CD8-positive, alpha-beta memory T cell (primary cell): ENCODE measurements at regions of chr2 and their contacts with region 1.

Region 1: DNA sequence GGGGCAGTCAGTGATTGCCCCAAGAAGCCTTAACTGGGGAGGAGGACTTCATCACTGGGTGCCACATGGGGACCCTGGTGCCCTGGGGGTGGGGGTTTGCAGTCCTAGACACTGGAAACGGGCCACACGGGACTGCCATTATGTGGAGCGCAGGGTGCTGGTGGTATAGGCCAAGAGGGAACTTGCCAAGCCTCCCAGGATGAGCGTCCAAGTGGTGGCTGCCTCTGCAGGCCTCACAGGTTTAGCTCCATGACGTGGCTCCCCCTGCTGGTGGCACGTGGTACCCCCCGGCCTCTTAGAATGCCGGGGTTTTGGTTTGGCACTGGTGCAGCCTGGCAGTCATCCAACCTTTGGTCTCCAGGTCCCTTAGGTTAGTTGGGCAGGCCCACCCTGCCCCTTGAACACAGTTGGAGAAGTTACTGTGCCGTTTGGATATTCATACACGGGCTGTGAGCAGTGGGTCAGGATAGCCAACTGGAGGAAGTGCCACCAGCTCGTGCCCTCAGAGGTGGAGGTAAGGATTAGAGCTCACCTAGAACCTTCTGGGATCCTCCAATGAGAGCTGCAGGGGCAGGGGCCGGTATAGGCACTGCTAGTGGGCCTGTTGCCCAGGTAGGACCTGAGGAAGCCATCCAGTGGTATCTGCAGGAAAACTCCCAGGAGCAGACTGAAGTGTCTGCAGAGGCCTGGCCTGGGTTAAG is 5.6 kb downstream of the PTMA start:
- DNase-seq: peak; percentile 86 to 93 (median 87)
- H3K4me3 ChIP-seq: no peak overlapping the region
- H3K4me3 Mint-ChIP-seq: peak overlapping the region in 6 of 7 donors; percentile 51 to 90 (median 66)
- H3K27ac ChIP-seq: peak overlapping the region; percentile 18
- H3K27ac Mint-ChIP-seq: peak overlapping the region; percentile 86 to 99 (median 96)
- H3K4me1 ChIP-seq: peaks cover 39% of the 10 kb centered on the region
- H3K4me1 Mint-ChIP-seq: peaks cover 31 to 39% (median 37%) of the 10 kb centered on the region in 3 donors
- H3K27me3 ChIP-seq: no peaks in the 10 kb centered on the region
- H3K27me3 Mint-ChIP-seq: peaks cover 0 to 28% of the 10 kb centered on the region in 2 donors

Region 2: GRCh38 chr2:231612179-231613053 is 101.5 kb before region 1 on chr2:
- CTCF ChIA-PET with region 1: interaction called, 131 read pairs
- POLR2A ChIA-PET with region 1: interaction called, 48 read pairs
- DNase-seq: peak; percentile 79 to 92 (median 81)
- H3K4me3 ChIP-seq: peak overlapping the region; percentile 62
- H3K4me3 Mint-ChIP-seq: peak overlapping the region; percentile 54 to 90 (median 81)
- H3K27ac ChIP-seq: no peak overlapping the region
- H3K27ac Mint-ChIP-seq: peak overlapping the region; percentile 63 to 100 (median 90)
- H3K4me1 ChIP-seq: peaks cover 19% of the 10 kb centered on the region
- H3K4me1 Mint-ChIP-seq: peaks cover 16 to 40% (median 19%) of the 10 kb centered on the region in 3 donors
- H3K27me3 ChIP-seq: no peaks in the 10 kb centered on the region
- H3K27me3 Mint-ChIP-seq: peaks cover 0 to 2% of the 10 kb centered on the region in 2 donors

Region 3: GRCh38 chr2:231648587-231649174 is 65.2 kb before region 1 on chr2:
- CTCF ChIA-PET with region 1: interaction called, 11 read pairs
- POLR2A ChIA-PET with region 1: no interaction called
- DNase-seq: peak; percentile 10 to 58 (median 23)
- H3K4me3 ChIP-seq: no peak overlapping the region
- H3K4me3 Mint-ChIP-seq: no peak overlapping the region
- H3K27ac ChIP-seq: no peak overlapping the region
- H3K27ac Mint-ChIP-seq: no peak overlapping the region
- H3K4me1 ChIP-seq: no peaks in the 10 kb centered on the region
- H3K4me1 Mint-ChIP-seq: no peaks in the 10 kb centered on the region
- H3K27me3 ChIP-seq: no peaks in the 10 kb centered on the region
- H3K27me3 Mint-ChIP-seq: peaks cover 1 to 7% of the 10 kb centered on the region in 2 donors

Region 4: DNA sequence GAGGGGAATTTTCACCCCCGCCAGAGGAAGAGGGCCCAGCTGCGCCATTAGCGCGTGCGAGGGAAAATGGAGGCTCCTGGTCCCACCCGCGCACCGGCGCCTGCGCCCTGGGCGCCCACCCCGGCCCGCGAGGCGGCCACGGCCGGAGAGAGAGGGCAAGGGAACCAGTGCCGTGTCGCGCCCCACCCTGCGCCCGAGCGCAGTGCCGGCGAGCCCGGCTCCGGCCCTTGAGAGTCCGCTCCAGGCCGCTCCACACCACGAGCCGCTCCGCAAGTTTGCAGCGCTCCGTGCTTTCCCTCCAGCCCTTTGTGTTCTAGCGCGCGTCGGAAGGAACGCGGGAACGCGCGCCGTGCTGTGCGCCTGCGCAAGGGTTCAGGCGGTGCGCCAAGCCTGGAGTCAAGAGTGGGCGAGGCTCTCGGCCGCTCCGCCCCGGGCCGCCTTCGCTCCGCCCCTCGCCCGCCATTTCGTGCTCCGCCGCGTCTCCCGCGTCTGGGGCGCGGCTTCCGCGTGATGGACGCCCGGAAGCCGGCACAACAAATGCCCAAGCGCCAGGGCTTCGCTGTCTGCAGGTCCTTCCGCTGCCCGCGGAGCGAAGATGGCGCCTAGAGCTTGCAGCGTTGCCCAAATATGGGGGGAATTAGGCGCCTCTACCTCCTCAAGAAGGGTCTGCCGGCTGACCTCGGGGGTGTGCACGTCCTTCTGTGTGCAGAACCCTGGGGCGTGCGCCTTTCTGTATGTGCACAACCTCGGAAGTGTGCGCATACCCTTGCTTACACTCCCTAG is 51.7 kb before region 1 on chr2:
- CTCF ChIA-PET with region 1: interaction called, 23 read pairs
- POLR2A ChIA-PET with region 1: interaction called, 48 read pairs
- DNase-seq: peak; percentile 94 to 99 (median 97)
- H3K4me3 ChIP-seq: peak overlapping the region; percentile 69
- H3K4me3 Mint-ChIP-seq: peak overlapping the region; percentile 74 to 88 (median 81)
- H3K27ac ChIP-seq: peak overlapping the region; percentile 83
- H3K27ac Mint-ChIP-seq: peak overlapping the region; percentile 92 to 97 (median 96)
- H3K4me1 ChIP-seq: peaks cover 11% of the 10 kb centered on the region
- H3K4me1 Mint-ChIP-seq: peaks cover 7 to 15% (median 12%) of the 10 kb centered on the region in 3 donors
- H3K27me3 ChIP-seq: no peaks in the 10 kb centered on the region
- H3K27me3 Mint-ChIP-seq: peaks cover 0 to 3% of the 10 kb centered on the region in 2 donors

Region 5: DNA sequence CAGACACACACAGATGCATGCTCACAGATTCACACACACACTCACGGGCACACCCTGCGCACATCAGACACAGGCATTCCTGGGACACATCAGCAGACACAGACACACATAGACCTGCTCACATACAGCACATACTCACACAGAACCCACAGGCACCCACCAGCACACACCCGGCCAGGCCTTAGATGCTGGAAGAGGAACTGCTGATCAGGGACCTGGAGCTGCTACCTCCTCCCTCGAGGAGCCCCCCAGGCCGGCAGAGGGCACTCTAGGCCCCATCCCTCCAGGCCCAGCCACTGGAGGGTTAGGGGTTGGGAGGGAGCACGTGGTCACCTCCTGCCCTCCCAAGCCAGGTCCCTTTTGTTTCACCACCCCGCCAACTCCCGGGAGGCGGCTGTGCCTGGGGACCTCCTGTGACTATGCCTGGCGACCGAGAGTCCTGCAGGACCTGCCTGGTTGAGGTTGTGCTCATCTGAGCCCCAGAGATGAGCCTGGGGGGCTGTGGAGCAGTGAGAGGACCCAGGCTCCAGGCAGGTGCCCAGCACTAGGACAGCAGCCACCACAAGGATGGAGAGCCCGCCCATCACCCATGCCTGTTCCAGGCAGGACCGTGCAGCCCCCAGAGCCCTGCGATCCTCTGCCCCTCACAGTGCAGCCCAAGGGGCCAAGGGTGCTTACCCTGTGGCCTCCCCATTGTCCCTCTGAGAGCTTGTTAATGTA is 26.6 kb before region 1 on chr2:
- CTCF ChIA-PET with region 1: interaction called, 209 read pairs
- POLR2A ChIA-PET with region 1: interaction called, 9 read pairs
- DNase-seq: peak; percentile 34 to 75 (median 52)
- H3K4me3 ChIP-seq: no peak overlapping the region
- H3K4me3 Mint-ChIP-seq: no peak overlapping the region
- H3K27ac ChIP-seq: no peak overlapping the region
- H3K27ac Mint-ChIP-seq: peak overlapping the region in 1 of 8 donors; percentile 43
- H3K4me1 ChIP-seq: no peaks in the 10 kb centered on the region
- H3K4me1 Mint-ChIP-seq: peaks cover 4 to 7% (median 5%) of the 10 kb centered on the region in 3 donors
- H3K27me3 ChIP-seq: no peaks in the 10 kb centered on the region
- H3K27me3 Mint-ChIP-seq: peaks cover 6 to 11% of the 10 kb centered on the region in 2 donors